ENCODE measurements at regions of chr17 and their contacts with region 1.

Region 1: GRCh38 chr17:74748529-74749365 is at the start of gene NHERF1:
- DNase-seq: peak; percentile 93
- H3K4me3 Mint-ChIP-seq: peak within 1 kb of the TSS; percentile 94
- H3K27ac Mint-ChIP-seq: peak within 1 kb of the TSS; percentile 93
- H3K4me1 Mint-ChIP-seq: peaks cover 54% of the 10 kb centered on the region
- H3K27me3 Mint-ChIP-seq: no peaks in the 10 kb centered on the region
- total RNA-seq, gene NHERF1: 70.8 to 77.6 TPM

Region 2: DNA sequence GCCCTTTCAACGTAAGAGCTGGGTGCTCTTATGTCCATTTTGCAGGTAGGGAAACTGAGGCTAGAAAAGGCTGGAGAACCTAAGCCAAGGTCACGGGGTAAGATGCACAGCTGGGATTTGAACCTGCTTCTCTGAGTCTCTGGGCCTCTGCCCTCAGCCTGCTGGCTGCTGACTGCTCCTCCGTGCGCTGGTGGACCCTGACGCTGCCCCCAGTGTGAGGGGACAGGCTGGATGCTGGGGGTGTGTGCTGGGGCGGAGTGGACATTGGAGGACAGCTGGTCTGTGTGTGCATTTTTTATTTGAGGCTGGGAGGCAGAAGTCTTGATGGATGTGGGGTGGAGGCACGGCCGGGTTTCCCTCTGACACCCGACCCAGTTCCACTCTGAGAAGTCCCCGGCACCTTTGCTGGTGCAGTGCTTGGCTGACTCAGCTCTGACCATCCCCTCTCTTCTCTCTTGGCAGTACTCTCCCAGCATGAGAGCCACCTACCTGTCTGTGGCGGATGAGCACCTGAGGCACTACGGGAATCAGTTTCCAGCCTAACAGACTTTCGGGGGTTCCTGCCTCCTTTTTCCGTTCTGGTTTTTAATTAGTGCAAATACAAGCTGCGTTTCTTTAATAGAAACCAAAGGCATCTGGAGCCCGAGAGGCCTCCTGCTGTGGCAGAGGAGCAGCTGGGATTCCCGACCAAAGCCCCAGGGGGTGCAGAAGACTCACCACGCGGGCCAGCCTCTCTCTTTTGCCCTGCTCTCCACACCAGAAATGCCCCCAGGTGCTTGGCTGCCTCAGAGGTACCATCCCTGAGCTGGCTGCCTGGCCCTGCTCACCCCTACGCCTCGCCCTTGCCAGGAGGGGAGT is 488.9 kb before region 1 on chr17:
- CTCF ChIA-PET with region 1: no interaction called
- intact Hi-C with region 1: no loop called
- DNase-seq: no peak
- H3K4me3 Mint-ChIP-seq: no peak overlapping the region
- H3K27ac Mint-ChIP-seq: no peak overlapping the region
- H3K4me1 Mint-ChIP-seq: no peaks in the 10 kb centered on the region
- H3K27me3 Mint-ChIP-seq: no peaks in the 10 kb centered on the region

Region 3: DNA sequence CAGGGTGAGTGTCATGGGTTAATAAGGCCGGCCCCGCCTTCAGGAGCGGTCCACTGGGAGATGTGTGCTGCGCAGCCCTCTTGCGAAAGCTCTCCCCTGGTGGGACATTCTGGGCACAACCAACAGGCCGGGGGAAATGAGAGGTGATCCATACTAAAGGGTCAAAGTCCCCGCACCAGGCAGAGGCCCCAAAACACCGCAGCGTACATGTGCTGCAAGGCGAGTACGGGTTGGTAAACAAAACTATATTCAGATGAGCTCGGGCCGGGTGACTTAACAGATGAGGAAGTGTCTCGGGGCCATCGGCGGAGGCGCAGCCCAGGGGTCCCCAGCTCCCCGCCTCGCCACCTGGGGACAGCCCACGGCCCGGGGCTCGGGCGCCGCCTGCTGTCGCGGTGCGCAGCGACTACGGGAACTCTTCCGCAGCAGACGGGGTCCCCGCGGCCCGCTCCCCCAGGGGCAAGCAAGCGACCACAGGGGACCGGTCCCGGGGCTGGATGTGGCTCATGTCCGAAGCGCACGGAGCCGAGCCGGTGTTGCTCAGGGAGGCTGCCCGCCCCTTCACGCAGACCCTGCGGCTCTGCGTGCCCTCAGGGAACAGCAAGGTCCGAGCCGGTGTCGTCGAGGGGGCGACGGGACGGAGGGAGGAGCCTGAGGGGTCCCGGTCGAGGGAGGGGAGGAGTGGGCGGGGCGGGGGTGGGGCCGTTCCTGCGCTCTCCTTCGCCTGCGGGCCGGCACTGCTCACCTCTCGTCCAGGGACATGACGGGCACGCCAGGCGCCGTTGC is 12.0 kb before region 1 on chr17 and contains the start of gene RAB37:
- CTCF ChIA-PET with region 1: interaction called, 22 read pairs
- intact Hi-C with region 1: no loop called
- DNase-seq: no peak
- H3K4me3 Mint-ChIP-seq: peak within 1 kb of the TSS; percentile 75
- H3K27ac Mint-ChIP-seq: peak within 1 kb of the TSS; percentile 77
- H3K4me1 Mint-ChIP-seq: peaks cover 42% of the 10 kb centered on the region
- H3K27me3 Mint-ChIP-seq: no peaks in the 10 kb centered on the region
- total RNA-seq, gene RAB37: 2.1 to 2.3 TPM

Region 4: GRCh38 chr17:74770498-74771318 is 22.0 kb after region 1 on chr17:
- CTCF ChIA-PET with region 1: interaction called, 59 read pairs
- intact Hi-C with region 1: loop called (anchors 1 kb)
- DNase-seq: peak; percentile 84
- H3K4me3 Mint-ChIP-seq: no peak overlapping the region
- H3K27ac Mint-ChIP-seq: peak overlapping the region; percentile 79
- H3K4me1 Mint-ChIP-seq: peaks cover 32% of the 10 kb centered on the region
- H3K27me3 Mint-ChIP-seq: no peaks in the 10 kb centered on the region

Region 5: GRCh38 chr17:74864866-74865395 is 116.2 kb after region 1 on chr17:
- CTCF ChIA-PET with region 1: interaction called, 58 read pairs
- intact Hi-C with region 1: loop called (anchors 1 kb)
- DNase-seq: peak; percentile 78
- H3K4me3 Mint-ChIP-seq: no peak overlapping the region
- H3K27ac Mint-ChIP-seq: no peak overlapping the region
- H3K4me1 Mint-ChIP-seq: peaks cover 15% of the 10 kb centered on the region
- H3K27me3 Mint-ChIP-seq: peaks cover 18% of the 10 kb centered on the region

Measured in activated naive CD4-positive, alpha-beta T cell treated with anti-CD3 and anti-CD28 coated beads for 36 hours (primary cell).